ENCODE measurements at regions of chr1 and their contacts with region 1.

Region 1: DNA sequence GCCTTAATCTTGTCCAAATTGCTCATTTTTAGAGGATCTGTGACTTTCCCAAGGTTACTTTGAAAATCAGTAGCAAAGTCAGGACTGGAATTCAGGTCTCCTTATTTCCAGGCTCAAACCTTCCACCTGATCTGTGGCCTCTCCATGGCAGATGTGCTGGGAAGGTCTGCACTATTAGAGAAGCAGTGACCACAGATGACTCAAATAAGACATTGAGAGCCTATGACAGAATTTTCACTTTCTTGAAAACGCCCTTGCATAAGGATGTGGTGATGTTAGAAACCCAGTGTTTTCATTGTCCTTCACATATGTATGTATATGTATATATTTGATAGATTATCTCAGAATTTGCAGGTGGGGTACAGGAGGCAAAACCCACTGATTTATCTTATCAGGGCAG is 45.3 kb downstream of the TTC39A start:
- DNase-seq: no peak
- H3K4me3 ChIP-seq: no peak overlapping the region
- H3K27ac ChIP-seq: no peak overlapping the region
- H3K4me1 ChIP-seq: no peaks in the 10 kb centered on the region
- H3K27me3 ChIP-seq: no peaks in the 10 kb centered on the region
- CTCF ChIP-seq: no peak

Region 2: GRCh38 chr1:51203121-51203873 is 81.8 kb before region 1 on chr1:
- CTCF ChIA-PET with region 1: no interaction called
- POLR2A ChIA-PET with region 1: interaction called, 24 read pairs
- intact Hi-C with region 1: no loop called
- DNase-seq: no peak
- H3K4me3 ChIP-seq: no peak overlapping the region
- H3K27ac ChIP-seq: no peak overlapping the region
- H3K4me1 ChIP-seq: no peaks in the 10 kb centered on the region
- H3K27me3 ChIP-seq: no peaks in the 10 kb centered on the region
- CTCF ChIP-seq: no peak

Measured in A673 (cell line).